CD4-positive, alpha-beta T cell (primary cell): ENCODE measurements at regions of chr5 and their contacts with region 1.

Region 1: GRCh38 chr5:178204182-178204894 is at the start of gene HNRNPAB:
- DNase-seq: peak; percentile 93 to 99 (median 97)
- ATAC-seq: peak; percentile 81
- H3K4me3 ChIP-seq: peak within 1 kb of the TSS; percentile 97
- H3K4me3 Mint-ChIP-seq: peak within 1 kb of the TSS; percentile 100
- H3K27ac ChIP-seq: peak within 1 kb of the TSS; percentile 29 to 62
- H3K27ac Mint-ChIP-seq: peak within 1 kb of the TSS; percentile 93
- H3K4me1 ChIP-seq: peaks cover 35% of the 10 kb centered on the region
- H3K4me1 Mint-ChIP-seq: peaks cover 40% of the 10 kb centered on the region
- H3K27me3 ChIP-seq: no peaks in the 10 kb centered on the region
- H3K27me3 Mint-ChIP-seq: peaks cover 4% of the 10 kb centered on the region
- CTCF ChIP-seq: no peak
- total RNA-seq, gene HNRNPAB: 63.6 to 68.9 TPM

Region 2: DNA sequence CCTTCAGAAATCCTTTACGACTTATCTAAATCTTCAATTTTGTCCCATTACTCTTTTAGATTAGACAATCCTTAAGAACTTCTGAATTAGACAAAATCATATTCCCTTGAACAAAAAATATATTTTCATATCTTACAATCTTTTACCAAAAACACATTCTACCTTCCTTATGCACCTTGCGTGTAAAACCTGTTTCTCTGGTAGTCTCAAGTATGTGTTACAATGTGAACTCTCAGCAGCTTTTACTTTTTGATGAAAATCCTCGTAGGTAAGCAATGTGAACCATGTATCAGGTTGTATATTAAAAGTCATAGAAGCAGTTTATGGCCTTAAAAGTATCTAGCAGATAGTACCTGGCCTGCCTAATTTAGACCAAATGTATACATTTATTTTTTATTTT is 29.9 kb before region 1 on chr5:
- CTCF ChIA-PET with region 1: no interaction called
- POLR2A ChIA-PET with region 1: no interaction called
- intact Hi-C with region 1: no loop called
- DNase-seq: no peak
- ATAC-seq: no peak
- H3K4me3 ChIP-seq: no peak overlapping the region
- H3K4me3 Mint-ChIP-seq: no peak overlapping the region
- H3K27ac ChIP-seq: no peak overlapping the region
- H3K27ac Mint-ChIP-seq: no peak overlapping the region
- H3K4me1 ChIP-seq: no peaks in the 10 kb centered on the region
- H3K4me1 Mint-ChIP-seq: no peaks in the 10 kb centered on the region
- H3K27me3 ChIP-seq: no peaks in the 10 kb centered on the region
- H3K27me3 Mint-ChIP-seq: peaks cover 6% of the 10 kb centered on the region
- CTCF ChIP-seq: no peak

Region 3: DNA sequence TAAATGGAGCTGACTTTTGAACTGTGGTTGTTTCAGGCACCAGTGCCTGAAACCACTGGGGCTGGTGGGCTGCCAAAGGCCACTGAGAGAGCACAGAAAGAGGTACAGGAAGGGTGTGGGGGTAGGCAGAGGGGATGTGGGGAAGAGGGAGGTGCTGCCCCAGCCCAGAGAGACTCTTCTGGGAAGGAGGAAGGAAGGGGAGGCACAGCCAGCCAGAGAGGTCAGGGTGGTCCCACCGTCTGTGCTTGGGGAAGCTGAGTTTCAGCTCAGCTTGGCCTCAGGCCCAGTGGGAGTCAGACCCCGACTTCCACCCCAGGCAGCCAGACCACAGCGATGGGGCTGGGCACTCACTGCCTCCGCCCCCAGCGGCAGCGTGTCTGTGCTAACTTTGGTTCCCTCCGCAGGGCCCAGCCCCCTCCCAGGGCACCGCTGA is 36.9 kb after region 1 on chr5:
- CTCF ChIA-PET with region 1: no interaction called
- POLR2A ChIA-PET with region 1: interaction called, 19 read pairs
- intact Hi-C with region 1: no loop called
- DNase-seq: peak in 2 of 14 experiments; percentile 26 to 50
- ATAC-seq: no peak
- H3K4me3 ChIP-seq: no peak overlapping the region
- H3K4me3 Mint-ChIP-seq: peak overlapping the region; percentile 31
- H3K27ac ChIP-seq: no peak overlapping the region
- H3K27ac Mint-ChIP-seq: peak overlapping the region; percentile 74
- H3K4me1 ChIP-seq: peaks cover 53% of the 10 kb centered on the region
- H3K4me1 Mint-ChIP-seq: peaks cover 30% of the 10 kb centered on the region
- H3K27me3 ChIP-seq: no peaks in the 10 kb centered on the region
- H3K27me3 Mint-ChIP-seq: no peaks in the 10 kb centered on the region
- CTCF ChIP-seq: no peak

Region 4: GRCh38 chr5:179516221-179516620 is 1311.9 kb after region 1 on chr5:
- CTCF ChIA-PET with region 1: no interaction called
- POLR2A ChIA-PET with region 1: no interaction called
- intact Hi-C with region 1: no loop called
- DNase-seq: no peak
- ATAC-seq: no peak
- H3K4me3 ChIP-seq: no peak overlapping the region
- H3K4me3 Mint-ChIP-seq: no peak overlapping the region
- H3K27ac ChIP-seq: no peak overlapping the region
- H3K27ac Mint-ChIP-seq: no peak overlapping the region
- H3K4me1 ChIP-seq: no peaks in the 10 kb centered on the region
- H3K4me1 Mint-ChIP-seq: no peaks in the 10 kb centered on the region
- H3K27me3 ChIP-seq: no peaks in the 10 kb centered on the region
- H3K27me3 Mint-ChIP-seq: peaks cover 11% of the 10 kb centered on the region
- CTCF ChIP-seq: no peak